ENCODE measurements at regions of chr16 and their contacts with region 1.

Region 1: DNA sequence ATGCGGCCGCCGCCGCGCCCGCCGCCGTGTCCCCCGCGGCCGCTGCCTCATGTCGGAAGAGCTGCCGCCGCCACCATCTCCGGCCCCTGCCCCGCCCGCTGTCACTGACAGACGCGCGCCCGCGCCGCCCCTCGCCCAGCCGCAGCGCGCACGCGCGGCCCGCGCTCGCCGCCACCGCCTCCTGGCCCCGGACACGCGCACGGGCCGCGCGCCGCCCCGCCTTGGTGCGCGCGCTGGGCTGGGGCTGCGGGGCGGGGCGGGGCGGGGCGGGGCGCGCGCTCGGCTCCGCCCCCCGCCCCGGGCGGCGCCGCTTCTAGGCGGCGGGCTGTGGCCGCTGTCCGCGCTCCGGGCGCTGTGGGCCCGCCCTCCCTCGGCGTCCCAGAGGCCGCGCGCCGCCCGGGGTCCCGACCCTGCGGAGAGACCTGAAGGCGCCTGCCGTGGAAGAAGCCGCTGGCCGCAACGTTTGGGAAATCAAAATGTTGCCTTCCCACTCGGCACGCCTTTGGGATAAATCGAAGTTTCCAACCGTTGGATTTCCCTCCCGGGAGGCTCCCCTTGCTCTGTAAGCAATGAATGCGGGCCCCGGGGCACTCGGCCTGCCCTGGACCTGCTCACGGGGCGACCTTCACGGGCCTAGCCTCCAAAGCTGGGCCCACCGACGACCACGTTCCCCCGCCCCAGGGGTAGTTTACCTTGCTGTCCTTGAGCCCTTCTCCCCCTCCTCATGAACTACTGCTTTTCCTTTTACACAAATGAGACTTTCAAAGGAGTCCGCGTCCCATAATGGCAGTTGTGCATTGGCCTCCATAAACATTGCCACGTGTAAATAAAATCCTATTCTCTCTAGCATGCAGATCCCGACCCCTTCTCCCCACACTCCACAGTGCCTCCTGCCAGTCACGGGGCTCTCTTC is at the start of gene ADCY9:
- DNase-seq: peak; percentile 83 to 93
- ATAC-seq: peak; percentile 85
- H3K4me3 ChIP-seq: peak within 1 kb of the TSS; percentile 86 to 88
- H3K27ac ChIP-seq: peak within 1 kb of the TSS; percentile 36 to 79
- H3K4me1 ChIP-seq: no peaks in the 10 kb centered on the region
- H3K27me3 ChIP-seq: no peaks in the 10 kb centered on the region
- total RNA-seq, gene ADCY9: 30.6 to 40.1 TPM

Region 2: GRCh38 chr16:3922276-3922675 is 194.3 kb before region 1 on chr16:
- intact Hi-C with region 1: no loop called
- DNase-seq: no peak
- ATAC-seq: no peak
- H3K4me3 ChIP-seq: no peak overlapping the region
- H3K27ac ChIP-seq: no peak overlapping the region
- H3K4me1 ChIP-seq: no peaks in the 10 kb centered on the region
- H3K27me3 ChIP-seq: no peaks in the 10 kb centered on the region

Region 3: GRCh38 chr16:3959148-3959547 is 157.4 kb before region 1 on chr16:
- intact Hi-C with region 1: loop called in 1 of 2 experiments (anchors 5 kb)
- DNase-seq: peak in 1 of 2 donors; percentile 74
- ATAC-seq: no peak
- H3K4me3 ChIP-seq: no peak overlapping the region
- H3K27ac ChIP-seq: no peak overlapping the region
- H3K4me1 ChIP-seq: no peaks in the 10 kb centered on the region
- H3K27me3 ChIP-seq: no peaks in the 10 kb centered on the region

Region 4: GRCh38 chr16:3983081-3983520 is 133.5 kb before region 1 on chr16:
- intact Hi-C with region 1: loop called in 1 of 2 experiments (anchors 10 kb)
- DNase-seq: peak in 1 of 2 donors; percentile 77
- ATAC-seq: peak; percentile 72
- H3K4me3 ChIP-seq: no peak overlapping the region
- H3K27ac ChIP-seq: no peak overlapping the region
- H3K4me1 ChIP-seq: no peaks in the 10 kb centered on the region
- H3K27me3 ChIP-seq: no peaks in the 10 kb centered on the region

Region 5: GRCh38 chr16:3999479-4000325 is 116.9 kb before region 1 on chr16:
- intact Hi-C with region 1: loop called in 1 of 2 experiments (anchors 5 kb)
- DNase-seq: peak; percentile 81 to 83
- ATAC-seq: peak; percentile 77
- H3K4me3 ChIP-seq: no peak overlapping the region
- H3K27ac ChIP-seq: no peak overlapping the region
- H3K4me1 ChIP-seq: no peaks in the 10 kb centered on the region
- H3K27me3 ChIP-seq: no peaks in the 10 kb centered on the region

Region 6: DNA sequence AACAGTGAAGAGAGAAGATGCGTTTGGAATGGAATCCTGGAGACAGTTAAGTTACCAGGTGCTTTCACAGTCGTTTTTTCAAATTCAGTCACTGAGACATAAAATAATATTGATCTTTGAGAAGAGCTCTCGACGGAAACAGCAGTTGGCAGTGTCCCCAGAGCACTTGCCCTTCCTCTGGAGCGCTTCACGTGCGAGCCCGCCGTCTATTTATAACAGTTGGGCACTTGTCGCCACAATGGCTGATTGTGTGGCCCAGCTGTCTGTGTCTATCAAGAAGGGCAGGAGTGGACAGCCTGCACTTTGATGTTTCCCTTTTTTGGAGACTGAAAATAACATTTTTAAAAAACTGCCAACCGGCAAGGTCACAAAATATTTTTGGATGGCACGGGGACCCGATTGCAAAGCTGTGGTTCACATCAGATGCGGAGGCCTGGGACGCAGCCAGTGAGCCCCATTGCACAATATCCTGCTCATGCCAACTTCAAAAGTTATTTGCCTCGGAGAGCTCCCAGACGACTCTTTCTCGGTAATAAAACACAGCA is 63.2 kb before region 1 on chr16:
- intact Hi-C with region 1: loop called in 1 of 2 experiments (anchors 5 kb)
- DNase-seq: peak; percentile 84 to 91
- ATAC-seq: peak; percentile 87
- H3K4me3 ChIP-seq: peak overlapping the region; percentile 1 to 4
- H3K27ac ChIP-seq: peak overlapping the region; percentile 1 to 72
- H3K4me1 ChIP-seq: peaks cover 0 to 5% of the 10 kb centered on the region in 2 donors
- H3K27me3 ChIP-seq: no peaks in the 10 kb centered on the region

Region 7: GRCh38 chr16:4183237-4184036 is 66.8 kb after region 1 on chr16:
- intact Hi-C with region 1: loop called in 1 of 2 experiments (anchors 5 kb)
- DNase-seq: peak; percentile 95 to 98
- ATAC-seq: peak; percentile 98
- H3K4me3 ChIP-seq: peak overlapping the region; percentile 13 to 54
- H3K27ac ChIP-seq: peak overlapping the region; percentile 36 to 72
- H3K4me1 ChIP-seq: no peaks in the 10 kb centered on the region
- H3K27me3 ChIP-seq: no peaks in the 10 kb centered on the region

Region 8: GRCh38 chr16:4253394-4254150 is 137.0 kb after region 1 on chr16:
- intact Hi-C with region 1: loop called in 1 of 2 experiments (anchors 1 kb)
- DNase-seq: peak; percentile 100
- ATAC-seq: peak; percentile 99
- H3K4me3 ChIP-seq: peak overlapping the region; percentile 13 to 42
- H3K27ac ChIP-seq: peak overlapping the region; percentile 34 to 62
- H3K4me1 ChIP-seq: no peaks in the 10 kb centered on the region
- H3K27me3 ChIP-seq: no peaks in the 10 kb centered on the region